Posterior vena cava (tissue), 2 donors: ENCODE measurements at regions of chr11 and their contacts with region 1.

Region 1: GRCh38 chr11:64204464-64204989 is 2.0 kb upstream of the FERMT3 start:
- DNase-seq: peak; percentile 95

Region 2: DNA sequence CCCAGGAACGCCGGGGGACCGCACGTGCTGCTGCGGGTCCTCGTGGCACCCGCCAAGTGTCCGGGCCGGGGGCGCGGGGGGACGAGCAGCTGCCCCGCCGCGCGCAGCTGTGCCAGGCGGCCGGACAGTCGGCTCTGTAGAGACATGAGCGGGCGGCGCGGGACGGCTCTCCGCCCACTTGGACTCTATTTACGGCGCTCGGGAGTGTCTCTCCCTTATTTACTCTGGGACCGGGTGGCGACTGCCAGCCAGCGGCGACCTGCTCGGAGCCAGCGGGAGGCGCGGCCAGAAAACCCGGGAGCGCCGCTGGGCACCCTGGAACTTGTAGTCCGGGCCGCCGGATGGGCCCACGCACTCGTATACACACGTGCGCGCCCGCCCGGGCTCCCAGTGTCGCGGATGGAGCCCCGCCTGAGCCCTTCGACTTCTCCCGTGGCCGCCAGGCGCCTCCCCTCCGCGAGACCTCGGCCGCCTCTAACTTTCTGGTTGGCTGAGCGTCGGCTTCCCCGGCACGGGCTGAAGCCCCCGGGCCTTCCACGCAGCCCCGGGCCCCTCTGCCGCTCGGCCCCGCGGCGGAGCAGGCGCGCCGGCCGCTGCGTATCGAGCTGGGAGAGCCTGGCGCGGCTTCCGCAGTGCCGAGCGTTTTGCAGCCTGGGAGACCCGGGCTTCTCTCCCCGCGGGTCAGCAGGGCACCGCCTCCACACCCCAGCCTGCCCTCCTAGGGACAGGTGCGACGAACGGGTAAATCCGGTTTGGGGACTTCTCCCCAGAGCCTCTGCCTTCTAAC is 38.5 kb before region 1 on chr11 and contains the start of gene MACROD1:
- intact Hi-C with region 1: no loop called
- DNase-seq: peak; percentile 96
- total RNA-seq, gene MACROD1: 15.9 to 16.8 TPM

Region 3: GRCh38 chr11:64223001-64223651 is 18.6 kb after region 1 on chr11:
- intact Hi-C with region 1: loop called in 1 of 2 experiments (anchors 1 kb)
- DNase-seq: peak; percentile 72

Region 4: GRCh38 chr11:64252003-64252872 is 47.7 kb after region 1 on chr11:
- intact Hi-C with region 1: no loop called
- DNase-seq: no peak

Region 5: GRCh38 chr11:64298966-64299846 is 94.7 kb after region 1 on chr11:
- intact Hi-C with region 1: loop called (anchors 5 to 10 kb)
- DNase-seq: peak; percentile 87

Region 6: GRCh38 chr11:64304316-64305072 is 100.0 kb after region 1 on chr11:
- intact Hi-C with region 1: loop called (anchors 5 to 10 kb)
- DNase-seq: peak; percentile 98